ENCODE measurements at regions of chr13 and their contacts with region 1.

Region 1: DNA sequence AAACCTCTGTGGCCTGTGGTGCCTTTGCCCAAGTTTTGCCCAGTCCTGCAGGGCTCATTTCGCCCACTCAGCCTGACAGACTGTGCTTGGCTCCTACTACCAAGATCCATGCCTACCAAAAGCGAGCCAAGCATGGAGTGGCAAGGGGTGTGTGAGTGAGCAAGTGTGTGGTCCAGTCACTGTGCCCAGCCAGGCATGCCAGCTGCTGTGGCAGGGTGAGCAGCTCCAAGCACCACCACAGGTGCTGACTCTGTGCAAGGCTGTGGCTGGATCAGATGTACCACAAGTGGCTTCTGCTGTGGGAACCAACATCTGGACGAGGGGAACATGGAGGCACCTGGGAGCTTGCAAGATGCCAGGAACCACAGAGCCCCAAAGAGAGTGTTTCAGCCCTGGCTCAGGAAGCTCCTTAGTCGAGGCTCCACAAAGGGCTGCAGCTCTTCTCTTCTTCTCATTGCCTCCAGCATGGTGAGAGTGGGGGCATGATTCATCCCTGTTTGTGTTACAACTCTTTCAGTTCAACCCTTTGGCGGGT is 1564.2 kb upstream of the MIR17HG start:
- DNase-seq: no peak
- H3K4me3 ChIP-seq: no peak overlapping the region
- H3K27ac ChIP-seq: no peak overlapping the region
- H3K27me3 ChIP-seq: no peaks in the 10 kb centered on the region
- CTCF ChIP-seq: no peak

Region 2: DNA sequence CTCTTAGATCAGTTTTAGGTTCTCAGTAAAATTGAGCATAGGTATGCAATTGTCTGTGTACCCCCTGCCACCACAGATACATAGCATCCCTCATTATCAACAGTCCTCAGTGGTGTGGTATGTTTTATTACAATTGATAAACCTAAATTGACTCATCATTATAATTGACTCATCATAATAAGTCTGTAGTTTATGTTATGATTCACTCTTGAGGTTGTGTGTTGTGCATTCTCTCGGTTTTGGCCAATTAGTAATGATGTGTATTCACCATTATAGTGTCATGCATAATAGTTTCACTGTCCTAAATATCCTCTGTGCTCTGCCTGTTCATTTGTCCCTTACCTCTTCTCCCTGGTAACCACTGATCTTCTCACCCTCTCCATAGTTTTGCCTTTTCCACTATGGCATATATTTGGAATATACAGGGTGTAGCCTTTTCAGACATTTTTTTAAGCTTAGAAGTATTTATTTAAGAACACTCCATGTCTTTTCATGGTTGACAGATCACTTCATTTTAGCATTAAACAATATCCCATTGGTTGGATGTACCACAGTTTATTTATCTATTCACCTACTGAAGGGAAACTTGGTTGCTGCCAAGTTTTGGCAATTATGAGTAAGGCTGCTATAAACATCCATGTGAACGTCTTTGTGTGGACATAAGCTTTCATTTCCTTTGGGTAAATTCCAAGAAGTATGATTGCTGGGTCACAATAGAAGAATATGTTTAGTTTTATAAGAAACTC is 56.4 kb before region 1 on chr13:
- intact Hi-C with region 1: loop called in 1 of 2 experiments (anchors 10 kb)
- DNase-seq: no peak
- H3K4me3 ChIP-seq: no peak overlapping the region
- H3K27ac ChIP-seq: no peak overlapping the region
- H3K27me3 ChIP-seq: no peaks in the 10 kb centered on the region
- CTCF ChIP-seq: no peak

Measured in dorsolateral prefrontal cortex (tissue), 120 donors.